ENCODE measurements at regions of chr10 and their contacts with region 1.

Region 1: DNA sequence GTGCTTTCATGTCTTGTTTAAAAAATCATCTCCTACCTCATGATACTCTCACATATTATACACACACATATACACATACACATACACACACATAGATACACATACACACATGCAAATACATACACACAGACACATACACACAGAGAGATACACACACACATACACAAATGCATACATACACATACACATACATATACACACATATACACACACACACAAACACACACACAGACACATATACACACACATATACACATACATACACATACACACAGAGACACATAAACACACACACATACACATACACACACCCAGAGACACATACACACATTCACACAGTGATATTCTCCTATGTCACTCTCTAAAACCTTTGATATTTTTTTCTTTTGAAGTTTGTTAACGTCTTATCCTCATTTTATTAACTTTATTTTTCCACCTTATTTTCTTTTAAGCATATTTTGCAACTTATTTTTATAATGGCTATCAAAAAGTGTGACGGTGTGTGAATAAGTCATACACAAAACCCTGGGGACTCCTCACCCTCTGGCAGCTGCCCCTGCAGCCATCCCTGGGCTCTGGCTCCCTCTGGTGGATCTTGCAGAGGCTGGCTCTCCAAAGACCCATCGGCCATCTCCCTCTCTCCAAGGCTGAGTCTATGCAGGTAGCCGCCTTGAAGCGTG is 3.9 kb upstream of the C10orf120 start:
- DNase-seq: peak; percentile 41
- ATAC-seq: peak; percentile 99
- H3K4me3 ChIP-seq: no peak overlapping the region
- H3K27ac ChIP-seq: no peak overlapping the region
- H3K4me1 ChIP-seq: no peaks in the 10 kb centered on the region
- H3K27me3 ChIP-seq: peaks cover 9% of the 10 kb centered on the region; the same call in 1 of the 2 replicates
- CTCF ChIP-seq: peak; percentile 98

Region 2: GRCh38 chr10:122298598-122299301 is 404.8 kb before region 1 on chr10:
- CTCF ChIA-PET with region 1: interaction called, 3 read pairs
- POLR2A ChIA-PET with region 1: no interaction called
- in situ Hi-C with region 1: no loop called
- intact Hi-C with region 1: loop called (anchors 1 kb)
- DNase-seq: peak; percentile 80
- ATAC-seq: peak; percentile 90
- H3K4me3 ChIP-seq: peak overlapping the region; percentile 18 to 24
- H3K27ac ChIP-seq: peak overlapping the region; percentile 76
- H3K4me1 ChIP-seq: peaks cover 17% of the 10 kb centered on the region
- H3K27me3 ChIP-seq: no peaks in the 10 kb centered on the region
- CTCF ChIP-seq: peak; percentile 96

Region 3: GRCh38 chr10:122525788-122526187 is 177.8 kb before region 1 on chr10:
- CTCF ChIA-PET with region 1: no interaction called
- POLR2A ChIA-PET with region 1: no interaction called
- in situ Hi-C with region 1: no loop called
- intact Hi-C with region 1: loop called (anchors 2 kb)
- DNase-seq: no peak
- ATAC-seq: peak; percentile 64; the same call in 1 of the 2 replicates
- H3K4me3 ChIP-seq: no peak overlapping the region
- H3K27ac ChIP-seq: no peak overlapping the region
- H3K4me1 ChIP-seq: no peaks in the 10 kb centered on the region
- H3K27me3 ChIP-seq: peaks cover 12% of the 10 kb centered on the region
- CTCF ChIP-seq: peak; percentile 26

Region 4: GRCh38 chr10:122648599-122649428 is 54.8 kb before region 1 on chr10:
- CTCF ChIA-PET with region 1: no interaction called
- POLR2A ChIA-PET with region 1: no interaction called
- in situ Hi-C with region 1: no loop called
- intact Hi-C with region 1: loop called (anchors 1 kb)
- DNase-seq: peak; percentile 20
- ATAC-seq: peak; percentile 70
- H3K4me3 ChIP-seq: no peak overlapping the region
- H3K27ac ChIP-seq: no peak overlapping the region
- H3K4me1 ChIP-seq: no peaks in the 10 kb centered on the region
- H3K27me3 ChIP-seq: peaks cover 33% of the 10 kb centered on the region
- CTCF ChIP-seq: peak; percentile 92

Region 5: GRCh38 chr10:122780391-122780790 is 76.8 kb after region 1 on chr10:
- CTCF ChIA-PET with region 1: no interaction called
- POLR2A ChIA-PET with region 1: no interaction called
- in situ Hi-C with region 1: no loop called
- intact Hi-C with region 1: no loop called
- DNase-seq: no peak
- ATAC-seq: peak; percentile 38; the same call in 1 of the 2 replicates
- H3K4me3 ChIP-seq: no peak overlapping the region
- H3K27ac ChIP-seq: no peak overlapping the region
- H3K4me1 ChIP-seq: no peaks in the 10 kb centered on the region
- H3K27me3 ChIP-seq: peaks cover 21% of the 10 kb centered on the region
- CTCF ChIP-seq: no peak

Measured in Panc1 (cell line).